Activated CD8-positive, alpha-beta T cell treated with anti-CD3 and anti-CD28 coated beads, Interleukin-2, amount 10 ng/mL, durations not matched to agents 7 days and 5 days (primary cell): ENCODE measurements at regions of chr3 and their contacts with region 1.

Region 1: GRCh38 chr3:179147873-179148615 is at the start of gene PIK3CA:
- DNase-seq: peak; percentile 97
- ATAC-seq: peak; percentile 86
- H3K4me3 Mint-ChIP-seq: peak within 1 kb of the TSS; percentile 96
- H3K27ac Mint-ChIP-seq: peak within 1 kb of the TSS; percentile 88
- H3K4me1 Mint-ChIP-seq: peaks cover 31% of the 10 kb centered on the region
- H3K27me3 Mint-ChIP-seq: peaks cover 12% of the 10 kb centered on the region
- total RNA-seq, gene PIK3CA: 22.3 to 23.9 TPM

Region 2: GRCh38 chr3:179046497-179047353 is 101.3 kb before region 1 on chr3:
- CTCF ChIA-PET with region 1: no interaction called
- POLR2A ChIA-PET with region 1: no interaction called
- DNase-seq: no peak
- ATAC-seq: no peak
- H3K4me3 Mint-ChIP-seq: no peak overlapping the region
- H3K27ac Mint-ChIP-seq: no peak overlapping the region
- H3K4me1 Mint-ChIP-seq: peaks cover 17% of the 10 kb centered on the region
- H3K27me3 Mint-ChIP-seq: no peaks in the 10 kb centered on the region

Region 3: GRCh38 chr3:179071550-179072397 is 76.3 kb before region 1 on chr3 and contains the start of gene ZMAT3:
- CTCF ChIA-PET with region 1: interaction called, 6 read pairs
- POLR2A ChIA-PET with region 1: interaction called, 14 read pairs
- DNase-seq: peak; percentile 87
- ATAC-seq: peak; percentile 89
- H3K4me3 Mint-ChIP-seq: peak within 1 kb of the TSS; percentile 96
- H3K27ac Mint-ChIP-seq: peak within 1 kb of the TSS; percentile 90
- H3K4me1 Mint-ChIP-seq: peaks cover 50% of the 10 kb centered on the region
- H3K27me3 Mint-ChIP-seq: no peaks in the 10 kb centered on the region
- total RNA-seq, gene ZMAT3: 15.9 to 17.1 TPM

Region 4: DNA sequence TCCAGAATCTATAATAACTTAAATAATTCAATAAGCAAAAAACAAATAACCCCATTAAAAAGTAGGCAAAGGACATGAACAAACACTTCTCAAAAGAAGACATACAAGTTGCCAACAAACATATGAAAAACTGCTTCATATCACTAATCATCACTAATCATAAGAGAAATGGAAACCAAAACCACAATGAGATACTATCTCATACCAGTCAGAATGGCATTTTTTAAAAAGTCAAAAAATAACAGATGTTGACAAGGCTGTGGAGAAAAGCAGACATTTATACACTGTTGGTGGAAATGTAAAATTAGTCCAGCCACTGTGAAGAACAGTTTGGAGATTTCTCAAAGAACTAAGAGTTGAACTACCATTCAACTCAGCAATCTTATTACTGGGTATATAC is 56.9 kb before region 1 on chr3:
- CTCF ChIA-PET with region 1: no interaction called
- POLR2A ChIA-PET with region 1: no interaction called
- DNase-seq: no peak
- ATAC-seq: no peak
- H3K4me3 Mint-ChIP-seq: no peak overlapping the region
- H3K27ac Mint-ChIP-seq: no peak overlapping the region
- H3K4me1 Mint-ChIP-seq: peaks cover 16% of the 10 kb centered on the region
- H3K27me3 Mint-ChIP-seq: peaks cover 2% of the 10 kb centered on the region

Region 5: DNA sequence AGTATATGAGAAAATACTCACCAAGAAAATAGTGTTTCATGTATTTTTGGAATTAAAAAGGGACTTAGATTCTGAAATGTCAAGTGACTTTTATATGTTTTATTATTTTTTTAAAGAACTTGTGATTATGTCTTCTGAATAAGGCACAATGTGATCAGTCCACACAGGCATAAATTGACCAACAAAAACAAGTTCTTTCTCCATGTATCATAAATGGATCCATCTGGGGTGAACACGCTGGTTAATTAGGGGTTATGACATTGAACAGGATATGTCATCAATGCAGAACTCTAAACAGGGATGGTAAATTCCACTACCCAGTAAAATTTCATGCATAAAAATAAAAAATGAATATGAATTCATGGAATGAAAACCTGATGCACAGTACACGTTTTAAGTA is 31.2 kb before region 1 on chr3:
- CTCF ChIA-PET with region 1: no interaction called
- POLR2A ChIA-PET with region 1: no interaction called
- DNase-seq: no peak
- ATAC-seq: no peak
- H3K4me3 Mint-ChIP-seq: no peak overlapping the region
- H3K27ac Mint-ChIP-seq: no peak overlapping the region
- H3K4me1 Mint-ChIP-seq: no peaks in the 10 kb centered on the region
- H3K27me3 Mint-ChIP-seq: peaks cover 14% of the 10 kb centered on the region

Region 6: DNA sequence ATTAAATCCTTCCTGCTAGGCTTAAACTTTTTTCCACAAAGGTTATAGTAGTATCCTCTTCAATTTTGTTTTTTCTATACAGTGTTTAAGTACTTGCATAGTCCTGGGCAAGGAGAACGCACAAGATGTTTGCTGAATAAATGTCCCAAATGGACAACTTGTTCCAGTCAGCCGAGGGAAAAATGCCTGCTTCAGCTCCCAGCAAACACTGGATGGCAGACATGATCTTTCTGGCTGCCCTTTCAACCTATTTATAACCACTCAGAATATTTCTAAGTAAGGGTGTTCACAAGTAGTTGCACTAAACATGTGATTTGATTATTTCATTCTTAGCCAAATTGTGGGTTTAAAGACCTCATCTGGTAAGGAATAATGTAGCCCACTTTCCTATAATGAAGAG is 273.5 kb after region 1 on chr3:
- CTCF ChIA-PET with region 1: no interaction called
- POLR2A ChIA-PET with region 1: no interaction called
- DNase-seq: no peak
- ATAC-seq: no peak
- H3K4me3 Mint-ChIP-seq: no peak overlapping the region
- H3K27ac Mint-ChIP-seq: no peak overlapping the region
- H3K4me1 Mint-ChIP-seq: no peaks in the 10 kb centered on the region
- H3K27me3 Mint-ChIP-seq: no peaks in the 10 kb centered on the region